HEK293 (cell line): ENCODE measurements at regions of chr11 and their contacts with region 1.

Region 1: DNA sequence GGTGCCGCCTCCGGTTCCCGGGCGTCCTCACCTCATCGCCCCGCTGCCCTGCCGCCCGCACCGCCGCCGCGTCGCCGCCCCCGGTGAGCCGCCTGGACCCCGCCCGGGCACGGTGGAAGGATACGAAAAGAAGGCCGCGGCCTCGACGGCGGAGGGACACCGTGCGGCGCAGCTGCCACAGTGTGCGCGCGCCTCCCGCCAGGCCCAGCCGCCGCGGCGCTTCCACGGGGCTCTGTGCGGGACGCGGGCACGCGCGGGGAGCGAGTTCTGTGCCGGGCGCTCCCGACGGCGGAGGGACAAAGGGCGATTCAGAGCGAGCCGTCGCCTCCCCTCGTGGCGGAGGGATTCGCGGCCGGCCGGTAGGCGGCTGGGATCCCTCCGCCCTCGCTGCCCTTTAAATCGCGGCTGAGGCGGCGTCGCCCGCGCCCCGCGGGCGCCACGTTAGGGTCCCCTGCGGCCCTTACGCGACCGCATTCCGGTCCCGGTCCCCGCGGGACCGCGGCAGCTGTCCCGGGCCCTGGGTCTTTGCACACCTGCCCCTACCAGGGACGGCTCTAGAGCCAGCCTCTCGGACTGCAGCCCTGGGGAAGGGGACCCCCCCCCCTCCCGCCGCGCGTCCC is 569 bp upstream of the KMT5B start:
- H3K4me3 ChIP-seq: peak overlapping the region; percentile 66
- H3K27ac ChIP-seq: peak overlapping the region; percentile 98
- H3K4me1 ChIP-seq: 0 out of 2 replicates have a peak, but pooled peaks cover 2% of the 10 kb centered on the region
- CTCF ChIP-seq: no peak

Region 2: GRCh38 chr11:68181719-68182451 is 31.8 kb before region 1 on chr11:
- CTCF ChIA-PET with region 1: interaction called, 10 read pairs
- POLR2A ChIA-PET with region 1: no interaction called
- H3K4me3 ChIP-seq: no peak overlapping the region
- H3K27ac ChIP-seq: no peak overlapping the region
- H3K4me1 ChIP-seq: no peaks in the 10 kb centered on the region
- CTCF ChIP-seq: no peak

Region 3: GRCh38 chr11:68191661-68192579 is 21.7 kb before region 1 on chr11:
- CTCF ChIA-PET with region 1: interaction called, 17 read pairs
- POLR2A ChIA-PET with region 1: interaction called, 3 read pairs
- H3K4me3 ChIP-seq: no peak overlapping the region
- H3K27ac ChIP-seq: no peak overlapping the region
- H3K4me1 ChIP-seq: no peaks in the 10 kb centered on the region
- CTCF ChIP-seq: no peak

Region 4: DNA sequence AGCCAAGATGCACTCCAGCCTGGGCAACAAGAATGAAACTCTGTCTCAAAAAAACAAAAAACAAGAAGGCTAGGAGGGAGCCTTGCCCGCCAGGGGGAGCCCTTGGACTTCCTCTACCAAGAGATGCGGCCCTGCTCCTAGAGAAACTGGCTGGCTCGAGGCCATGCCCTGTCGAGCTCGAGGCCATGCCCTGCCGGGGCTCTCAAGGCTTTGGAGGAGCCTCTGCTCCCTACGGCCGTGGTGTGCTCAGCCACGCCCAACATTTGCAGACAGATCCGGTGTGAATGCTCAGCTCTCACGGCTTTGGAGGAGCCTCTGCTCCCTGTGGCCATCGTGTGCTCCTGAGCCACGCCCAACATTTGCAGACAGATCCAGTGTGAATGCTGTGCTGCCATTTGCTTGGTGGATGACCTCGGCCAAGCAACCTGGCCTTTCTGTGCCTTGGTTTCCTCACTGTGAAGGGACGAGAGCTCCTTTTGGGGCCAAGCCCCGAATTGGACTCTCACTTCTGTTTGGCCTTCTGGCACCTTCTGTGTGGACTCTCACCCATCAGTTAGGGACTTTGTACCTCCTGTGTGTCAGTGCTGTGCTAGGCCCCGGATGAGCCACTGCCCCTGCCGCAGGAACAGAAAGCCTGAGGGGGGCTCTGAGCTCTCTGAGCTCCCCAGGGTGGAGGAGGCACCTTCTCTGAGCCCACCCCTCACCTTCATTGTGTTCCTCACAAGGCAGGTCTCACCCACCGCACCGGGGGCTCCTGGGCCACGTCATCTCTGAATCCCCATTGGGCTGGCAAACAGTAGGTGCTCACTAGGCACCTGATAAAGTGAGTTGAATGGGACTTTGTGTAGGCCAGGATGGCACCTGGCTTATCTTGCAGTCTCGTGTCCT is 44.1 kb after region 1 on chr11:
- CTCF ChIA-PET with region 1: interaction called, 11 read pairs
- POLR2A ChIA-PET with region 1: no interaction called
- H3K4me3 ChIP-seq: no peak overlapping the region
- H3K27ac ChIP-seq: no peak overlapping the region
- H3K4me1 ChIP-seq: no peaks in the 10 kb centered on the region
- CTCF ChIP-seq: peak; percentile 81